ENCODE measurements at regions of chr2 and their contacts with region 1.

Region 1: DNA sequence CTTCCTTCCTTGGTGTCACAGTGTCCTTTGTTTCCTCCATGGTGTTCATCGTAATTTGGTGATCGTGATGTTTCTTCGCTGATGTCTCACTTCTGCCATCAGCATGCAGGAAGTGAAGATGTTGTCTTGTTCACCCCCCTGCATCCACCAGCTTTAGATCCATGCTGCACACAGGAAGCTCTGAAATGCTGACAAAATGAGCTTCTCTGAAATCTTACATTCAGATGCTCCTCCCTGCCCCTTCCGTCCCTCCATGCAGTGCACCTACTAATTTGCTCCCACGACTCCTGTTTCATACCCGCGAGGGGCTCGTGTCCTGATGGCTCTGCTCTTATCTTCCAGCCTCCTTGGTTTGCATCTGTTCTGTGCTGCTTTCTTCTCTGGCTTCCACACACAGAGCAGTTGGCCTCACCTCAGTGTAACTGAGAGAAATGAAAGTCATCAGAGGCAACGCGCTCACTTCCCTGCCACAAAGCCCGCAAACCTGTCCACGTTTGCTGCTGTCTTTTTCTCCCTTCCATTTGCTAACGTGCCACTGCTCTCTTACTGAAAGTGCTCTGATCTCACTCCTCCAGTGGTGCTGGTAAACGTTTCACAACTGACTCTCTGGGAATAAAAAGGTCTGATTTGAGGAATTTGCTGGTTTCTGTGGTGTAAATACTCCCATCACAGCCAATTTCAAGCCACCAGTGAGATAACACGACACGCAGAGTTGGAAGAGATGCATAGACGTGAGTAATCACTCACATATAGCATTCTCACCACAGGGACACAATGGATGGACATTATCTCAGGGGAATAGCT is 41.0 kb upstream of the MGAT4A start:
- DNase-seq: peak; percentile 77
- H3K4me3 Mint-ChIP-seq: peak overlapping the region; percentile 92
- H3K27ac Mint-ChIP-seq: peak overlapping the region; percentile 95
- H3K4me1 Mint-ChIP-seq: peaks cover 68% of the 10 kb centered on the region
- H3K27me3 Mint-ChIP-seq: no peaks in the 10 kb centered on the region

Region 2: GRCh38 chr2:98438190-98439133 is 333.5 kb before region 1 on chr2:
- CTCF ChIA-PET with region 1: no interaction called
- POLR2A ChIA-PET with region 1: no interaction called
- intact Hi-C with region 1: loop called (anchors 5 kb)
- DNase-seq: no peak
- H3K4me3 Mint-ChIP-seq: peak overlapping the region; percentile 8
- H3K27ac Mint-ChIP-seq: peak overlapping the region; percentile 73
- H3K4me1 Mint-ChIP-seq: peaks cover 27% of the 10 kb centered on the region
- H3K27me3 Mint-ChIP-seq: no peaks in the 10 kb centered on the region

Region 3: DNA sequence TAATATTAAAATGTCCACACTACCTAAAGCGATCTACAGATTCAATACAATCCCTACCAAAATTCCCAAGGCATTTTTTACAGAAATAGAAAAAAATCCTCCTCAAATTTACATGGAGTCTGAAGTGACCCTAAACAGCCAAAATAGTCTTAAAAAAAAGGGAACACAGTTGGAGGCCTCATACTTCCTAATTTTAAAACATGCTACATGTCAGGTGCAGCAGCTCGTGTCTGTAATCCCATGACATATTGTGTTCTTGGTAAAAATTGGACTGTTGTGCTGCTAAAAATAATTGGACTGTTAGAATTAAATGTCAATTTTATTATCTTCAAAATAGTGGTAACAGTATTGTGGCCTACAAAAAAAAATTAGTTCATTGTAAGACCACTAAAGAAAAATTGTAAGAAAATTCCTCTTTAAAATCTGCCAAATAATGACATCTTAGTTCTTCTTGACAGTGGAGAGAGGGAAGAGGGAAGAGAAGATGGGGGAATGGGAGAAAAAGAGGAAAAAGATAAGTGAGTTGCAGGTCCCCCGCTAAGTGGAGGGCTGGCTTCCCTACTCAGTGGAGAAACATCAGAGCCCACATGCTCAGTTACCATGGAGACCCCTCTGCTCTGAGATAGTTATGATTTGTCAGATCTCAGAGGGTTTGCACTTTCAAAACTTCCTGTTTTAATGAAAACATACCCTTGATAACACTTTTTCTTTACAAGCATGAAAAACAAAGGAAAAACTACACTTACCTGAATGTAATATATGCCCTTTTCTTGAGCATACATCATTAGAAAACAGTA is 117.0 kb before region 1 on chr2:
- CTCF ChIA-PET with region 1: interaction called, 8 read pairs
- POLR2A ChIA-PET with region 1: interaction called, 6 read pairs
- intact Hi-C with region 1: loop called (anchors 1 kb)
- DNase-seq: no peak
- H3K4me3 Mint-ChIP-seq: no peak overlapping the region
- H3K27ac Mint-ChIP-seq: peak overlapping the region; percentile 67
- H3K4me1 Mint-ChIP-seq: peaks cover 76% of the 10 kb centered on the region
- H3K27me3 Mint-ChIP-seq: no peaks in the 10 kb centered on the region

Region 4: GRCh38 chr2:98736464-98736889 is 35.4 kb before region 1 on chr2:
- CTCF ChIA-PET with region 1: interaction called, 6 read pairs
- POLR2A ChIA-PET with region 1: interaction called, 28 read pairs
- intact Hi-C with region 1: loop called (anchors 1 kb)
- DNase-seq: peak; percentile 54
- H3K4me3 Mint-ChIP-seq: peak overlapping the region; percentile 54
- H3K27ac Mint-ChIP-seq: peak overlapping the region; percentile 72
- H3K4me1 Mint-ChIP-seq: peaks cover 71% of the 10 kb centered on the region
- H3K27me3 Mint-ChIP-seq: no peaks in the 10 kb centered on the region

Region 5: DNA sequence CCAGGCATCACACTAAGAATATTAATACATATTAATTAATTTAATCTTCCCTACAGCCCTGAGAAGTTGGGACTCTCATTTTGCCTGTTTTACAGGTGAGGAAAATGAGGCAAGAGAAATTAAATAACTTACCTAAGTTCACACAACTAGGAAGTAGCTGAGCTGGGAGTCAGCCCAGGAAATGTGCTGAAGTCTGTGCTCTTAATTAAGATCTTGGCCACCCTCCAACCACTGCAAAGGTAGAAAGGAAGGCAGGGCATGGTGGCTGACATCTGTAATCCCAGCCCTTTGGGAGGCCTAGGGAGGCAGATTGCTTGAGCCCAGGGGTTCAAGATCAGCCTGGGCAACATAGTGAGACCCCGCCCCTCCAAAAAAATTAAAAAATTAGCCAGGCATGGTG is 28.1 kb before region 1 on chr2:
- CTCF ChIA-PET with region 1: interaction called, 11 read pairs
- POLR2A ChIA-PET with region 1: interaction called, 3 read pairs
- intact Hi-C with region 1: no loop called
- DNase-seq: no peak
- H3K4me3 Mint-ChIP-seq: no peak overlapping the region
- H3K27ac Mint-ChIP-seq: no peak overlapping the region
- H3K4me1 Mint-ChIP-seq: peaks cover 44% of the 10 kb centered on the region
- H3K27me3 Mint-ChIP-seq: no peaks in the 10 kb centered on the region

Region 6: DNA sequence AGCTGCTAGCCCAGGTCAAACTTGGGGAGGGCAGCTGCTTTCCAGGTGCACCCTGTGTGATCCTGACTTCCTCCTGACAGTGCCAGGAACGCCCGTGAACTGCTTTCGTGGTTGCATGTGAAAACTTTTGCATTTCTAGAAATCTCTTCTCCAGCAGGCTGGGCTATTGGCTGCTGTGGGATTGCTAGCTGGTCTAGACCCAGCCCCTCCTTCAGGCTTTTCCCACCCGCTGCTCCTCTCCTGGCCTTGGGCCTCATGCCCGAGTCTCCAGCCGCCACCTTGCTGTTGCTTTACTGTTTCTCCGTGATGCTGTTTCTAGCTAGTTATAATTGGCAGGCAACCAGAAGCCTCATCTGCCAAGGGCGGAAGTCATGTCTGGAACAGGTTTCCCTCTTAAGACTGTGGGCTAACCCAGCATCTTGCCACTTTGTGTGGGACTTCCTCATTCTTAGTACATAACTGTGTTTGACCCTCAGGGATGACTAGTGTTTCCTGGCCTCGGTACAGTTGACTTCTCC is 14.0 kb before region 1 on chr2:
- CTCF ChIA-PET with region 1: interaction called, 16 read pairs
- POLR2A ChIA-PET with region 1: interaction called, 7 read pairs
- intact Hi-C with region 1: loop called (anchors 1 kb)
- DNase-seq: peak; percentile 69
- H3K4me3 Mint-ChIP-seq: peak overlapping the region; percentile 51
- H3K27ac Mint-ChIP-seq: peak overlapping the region; percentile 86
- H3K4me1 Mint-ChIP-seq: peaks cover 51% of the 10 kb centered on the region
- H3K27me3 Mint-ChIP-seq: no peaks in the 10 kb centered on the region

Region 7: DNA sequence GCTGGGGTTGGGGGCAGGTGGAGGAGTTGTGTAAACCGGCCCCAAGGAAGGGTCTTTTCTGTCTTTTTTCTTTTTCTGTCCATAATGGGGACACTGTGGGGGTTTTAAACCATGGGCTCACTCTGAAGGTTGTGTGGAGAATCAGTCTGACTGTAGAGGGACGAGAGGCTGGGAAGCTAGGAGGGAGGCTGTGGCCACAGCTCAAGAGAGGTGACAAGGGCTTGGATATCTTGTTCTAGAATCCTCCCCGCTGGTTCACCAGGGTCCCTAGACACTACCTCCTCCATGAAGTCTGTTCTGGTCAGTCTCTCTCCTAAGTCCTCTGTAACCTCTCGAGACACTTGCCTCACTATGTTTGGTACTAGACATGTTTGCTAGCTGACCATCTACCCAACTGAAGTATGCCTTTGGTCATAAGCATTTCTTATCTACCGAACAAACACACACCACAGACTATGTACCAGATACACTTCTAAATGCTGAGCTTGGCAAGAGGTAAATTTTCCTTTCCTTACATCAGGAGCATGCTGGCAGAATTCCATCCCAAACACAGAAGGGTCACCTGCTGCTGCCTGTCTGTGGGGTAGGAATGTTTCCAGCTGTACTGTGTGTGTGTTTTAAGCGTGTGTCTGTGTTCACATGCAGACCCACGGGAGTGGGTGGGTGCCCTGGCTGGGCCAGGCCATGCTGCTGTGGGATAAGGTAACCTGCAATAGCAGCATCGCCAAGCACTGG is 28.6 kb after region 1 on chr2:
- CTCF ChIA-PET with region 1: no interaction called
- POLR2A ChIA-PET with region 1: no interaction called
- intact Hi-C with region 1: no loop called
- DNase-seq: no peak
- H3K4me3 Mint-ChIP-seq: no peak overlapping the region
- H3K27ac Mint-ChIP-seq: no peak overlapping the region
- H3K4me1 Mint-ChIP-seq: no peaks in the 10 kb centered on the region
- H3K27me3 Mint-ChIP-seq: no peaks in the 10 kb centered on the region

Region 8: DNA sequence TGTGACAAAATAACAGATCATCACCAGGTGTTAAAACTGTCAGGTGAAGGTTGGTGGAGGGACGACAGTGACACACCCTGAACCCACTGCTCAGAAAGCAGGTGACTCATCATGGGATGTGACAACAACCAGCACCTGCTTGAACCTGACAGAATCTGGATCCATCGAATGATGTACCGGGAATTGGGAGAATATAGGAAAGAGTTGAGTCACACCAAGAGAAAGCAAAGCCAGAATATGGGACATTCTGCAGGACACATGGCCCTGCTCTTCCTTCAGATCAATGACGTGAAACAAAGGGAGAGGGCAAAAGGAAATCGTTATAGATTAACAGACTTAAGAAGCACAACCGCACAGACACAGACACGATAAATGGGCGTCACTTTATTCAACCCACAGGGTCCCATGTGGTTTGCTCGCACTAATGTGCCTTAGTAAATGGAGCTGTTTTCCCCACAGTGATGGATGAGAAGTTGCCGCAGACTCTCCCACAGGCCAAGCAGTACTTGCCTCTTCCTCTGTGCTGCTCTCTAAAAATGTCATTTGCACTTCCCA is 64.0 kb after region 1 on chr2:
- CTCF ChIA-PET with region 1: interaction called, 5 read pairs
- POLR2A ChIA-PET with region 1: no interaction called
- intact Hi-C with region 1: loop called (anchors 2 kb)
- DNase-seq: peak; percentile 56
- H3K4me3 Mint-ChIP-seq: peak overlapping the region; percentile 6
- H3K27ac Mint-ChIP-seq: peak overlapping the region; percentile 21
- H3K4me1 Mint-ChIP-seq: peaks cover 35% of the 10 kb centered on the region
- H3K27me3 Mint-ChIP-seq: no peaks in the 10 kb centered on the region